Posterior vena cava (tissue), 2 donors: ENCODE measurements at regions of chr15 and their contacts with region 1.

Region 1: DNA sequence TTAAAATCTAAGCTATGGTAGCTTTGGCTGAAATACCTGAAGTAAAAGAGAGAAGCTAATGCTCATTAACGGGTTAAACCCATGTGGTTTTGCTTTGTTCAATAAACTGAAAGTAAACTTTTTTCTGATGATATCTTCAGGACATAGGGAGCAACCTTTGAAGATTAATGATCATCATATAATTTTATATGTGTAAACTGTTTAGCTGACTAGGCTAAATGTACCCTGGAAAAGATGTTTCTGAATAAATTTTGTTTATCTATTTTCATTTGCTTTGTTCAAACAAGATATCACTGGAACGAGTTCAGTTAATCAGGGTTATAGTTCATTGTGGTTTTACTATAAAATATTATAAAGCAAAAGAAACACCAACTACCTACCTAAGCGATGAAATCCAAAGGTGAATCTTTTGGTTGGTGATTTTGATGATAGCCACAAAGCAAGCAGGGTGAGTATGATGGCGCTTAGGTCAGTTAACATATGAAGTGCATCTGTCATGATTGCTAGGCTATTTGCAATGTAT is 11.7 kb downstream of the SLC30A4 start:
- DNase-seq: no peak

Region 2: DNA sequence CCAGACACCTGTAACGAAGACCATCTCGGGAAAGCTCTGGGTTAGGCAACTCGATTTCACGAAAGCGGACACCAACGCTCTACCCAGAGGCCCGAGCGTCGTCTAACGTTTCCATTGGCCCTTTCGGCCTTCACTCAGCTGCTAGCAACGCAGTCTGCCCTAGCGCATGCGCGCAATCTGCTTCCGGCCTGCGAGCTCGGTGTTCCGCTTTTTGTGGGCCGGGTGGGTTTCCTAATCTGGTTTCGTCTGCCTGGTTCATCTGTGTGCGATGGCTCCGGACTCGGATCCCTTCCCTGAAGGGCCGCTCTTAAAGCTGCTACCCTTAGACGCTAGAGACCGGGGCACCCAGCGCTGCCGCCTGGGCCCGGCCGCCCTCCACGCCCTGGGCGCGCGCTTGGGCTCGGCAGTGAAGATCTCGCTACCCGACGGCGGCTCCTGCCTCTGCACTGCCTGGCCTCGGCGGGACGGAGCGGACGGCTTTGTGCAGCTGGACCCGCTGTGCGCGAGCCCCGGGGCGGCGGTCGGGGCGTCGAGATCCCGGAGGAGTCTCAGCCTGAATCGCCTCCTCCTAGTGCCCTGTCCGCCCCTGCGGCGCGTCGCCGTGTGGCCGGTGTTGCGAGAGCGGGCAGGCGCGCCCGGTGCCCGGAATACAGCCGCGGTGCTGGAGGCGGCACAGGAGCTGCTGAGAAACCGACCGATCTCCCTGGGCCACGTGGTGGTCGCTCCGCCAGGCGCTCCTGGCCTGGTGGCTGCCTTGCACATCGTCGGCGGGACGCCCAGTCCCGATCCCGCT is 108.5 kb before region 1 on chr15:
- intact Hi-C with region 1: no loop called
- DNase-seq: peak; percentile 99

Region 3: DNA sequence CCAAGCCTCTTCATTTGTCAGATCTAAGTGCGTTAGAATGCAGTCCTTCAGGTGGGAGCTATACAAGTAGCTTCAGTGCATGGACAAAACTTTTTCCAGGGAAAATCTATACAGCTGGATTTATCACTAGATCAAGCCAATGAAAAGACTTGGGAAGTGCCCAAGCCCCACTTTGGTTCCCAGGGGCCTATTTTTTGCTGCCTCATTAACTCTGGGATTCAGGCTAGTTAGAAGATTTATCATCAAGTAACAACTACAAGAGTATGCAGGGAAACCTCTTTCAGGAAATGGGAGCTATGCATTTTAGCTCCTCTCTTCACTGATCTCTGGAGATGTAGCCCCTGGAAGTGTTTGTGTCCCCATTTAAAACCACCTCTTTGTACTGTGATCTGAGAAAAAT is 1032.8 kb after region 1 on chr15:
- intact Hi-C with region 1: loop called in 1 of 2 experiments (anchors 5 kb)
- DNase-seq: no peak